Left colon (tissue), 2 donors: ENCODE measurements at regions of chr4 and their contacts with region 1.

Region 1: DNA sequence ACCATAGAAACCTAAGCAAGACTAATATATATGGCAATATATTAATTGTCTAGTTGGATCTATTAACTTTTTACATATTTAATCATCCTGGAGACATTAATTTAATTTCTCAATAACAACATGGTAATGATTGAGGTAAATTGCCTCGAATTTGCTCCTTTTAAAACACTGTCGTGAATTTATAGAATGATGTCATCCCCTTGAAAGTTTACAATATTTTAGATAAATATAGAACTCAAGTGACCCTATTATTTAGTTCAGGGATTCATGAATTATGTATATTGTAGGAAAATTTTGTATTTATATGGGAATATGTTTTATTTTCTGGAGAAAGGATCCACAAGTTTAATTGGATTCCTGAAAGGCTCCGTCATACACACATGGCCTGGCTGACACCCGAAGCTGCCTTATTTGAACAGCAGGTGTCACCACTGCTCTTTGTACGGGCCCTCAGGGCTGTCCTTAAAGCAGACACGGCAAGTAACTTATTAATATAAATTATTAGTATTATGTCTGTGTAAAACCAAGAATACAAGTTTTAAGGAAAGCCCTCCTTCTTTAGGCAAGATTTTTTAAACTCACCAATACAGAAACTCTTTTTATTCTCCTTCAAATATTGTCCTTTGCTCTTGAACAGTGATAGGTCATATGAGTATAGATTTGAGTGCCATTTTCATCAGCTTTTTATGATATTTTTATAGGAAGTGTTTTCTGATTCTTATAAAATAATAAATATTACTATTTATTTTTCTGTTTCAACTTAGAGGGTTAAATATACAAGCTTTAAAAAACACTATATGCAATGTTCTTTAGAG is 1.9 kb upstream of the PLRG1 start:
- DNase-seq: peak; percentile 53 to 71
- ATAC-seq: peak; percentile 67

Region 2: DNA sequence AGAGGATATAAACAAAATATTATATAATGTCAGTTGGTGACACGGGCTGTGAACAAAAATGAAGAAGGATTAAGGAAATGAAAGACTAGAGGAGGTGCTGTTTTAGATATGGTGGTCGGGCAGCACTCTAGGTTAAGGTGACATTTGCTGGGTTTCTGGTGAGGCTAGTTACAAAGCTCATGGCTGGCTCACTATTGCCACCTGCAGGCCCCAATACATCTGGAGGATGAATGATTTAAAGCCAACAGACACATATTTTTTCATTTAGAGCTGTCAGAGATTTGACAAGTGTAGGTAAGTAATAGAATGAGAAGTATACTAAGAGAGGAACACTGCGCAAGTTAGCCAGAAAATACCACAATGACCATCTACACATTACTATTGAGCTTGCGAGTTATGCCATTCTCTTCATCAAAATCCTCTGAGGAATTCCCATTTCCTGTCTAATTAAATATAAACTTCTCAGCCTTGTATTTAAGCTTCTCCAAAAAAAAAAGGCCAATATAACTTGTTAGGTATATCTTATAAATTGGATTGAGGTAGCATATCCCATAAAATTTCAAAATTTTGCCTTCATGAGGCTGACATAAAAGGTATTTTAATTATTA is 66.7 kb after region 1 on chr4:
- intact Hi-C with region 1: loop called (anchors 5 to 10 kb)
- DNase-seq: peak; percentile 34 to 85
- ATAC-seq: peak; percentile 77

Region 3: GRCh38 chr4:154626793-154627484 is 74.9 kb after region 1 on chr4:
- intact Hi-C with region 1: loop called in 1 of 2 experiments (anchors 10 kb)
- DNase-seq: peak; percentile 34 to 44
- ATAC-seq: peak; percentile 77

Region 4: DNA sequence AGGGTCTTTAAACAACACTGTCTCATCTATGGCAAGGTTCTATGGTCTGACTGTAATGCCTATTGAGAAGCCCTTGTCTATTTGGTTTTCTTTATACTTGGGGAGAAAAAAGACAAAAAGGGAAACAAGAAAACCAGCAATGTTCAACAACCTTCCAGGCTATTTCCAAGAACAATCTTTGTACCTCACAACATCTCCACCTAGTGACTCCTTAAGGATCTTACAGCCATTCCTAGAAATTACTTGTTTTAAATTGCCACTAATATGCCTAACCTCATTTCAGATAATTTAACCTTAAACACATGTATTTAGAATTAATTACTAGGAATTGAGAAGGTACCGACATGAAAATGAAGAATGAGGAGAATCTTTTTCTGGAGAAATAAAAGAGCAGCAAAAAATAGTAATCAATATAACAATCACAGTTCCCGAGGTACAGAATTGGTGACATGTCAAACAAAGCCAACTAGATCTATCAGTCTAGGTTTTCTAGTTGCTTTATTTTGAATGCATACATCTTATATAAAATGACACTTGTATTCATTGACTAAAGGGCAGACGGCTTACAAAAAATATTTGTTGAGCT is 227.4 kb after region 1 on chr4:
- intact Hi-C with region 1: loop called in 1 of 2 experiments (anchors 10 kb)
- DNase-seq: no peak
- ATAC-seq: no peak